Right ventricle myocardium inferior (tissue), 1 donor: ENCODE measurements at regions of chr11 and their contacts with region 1.

Region 1: DNA sequence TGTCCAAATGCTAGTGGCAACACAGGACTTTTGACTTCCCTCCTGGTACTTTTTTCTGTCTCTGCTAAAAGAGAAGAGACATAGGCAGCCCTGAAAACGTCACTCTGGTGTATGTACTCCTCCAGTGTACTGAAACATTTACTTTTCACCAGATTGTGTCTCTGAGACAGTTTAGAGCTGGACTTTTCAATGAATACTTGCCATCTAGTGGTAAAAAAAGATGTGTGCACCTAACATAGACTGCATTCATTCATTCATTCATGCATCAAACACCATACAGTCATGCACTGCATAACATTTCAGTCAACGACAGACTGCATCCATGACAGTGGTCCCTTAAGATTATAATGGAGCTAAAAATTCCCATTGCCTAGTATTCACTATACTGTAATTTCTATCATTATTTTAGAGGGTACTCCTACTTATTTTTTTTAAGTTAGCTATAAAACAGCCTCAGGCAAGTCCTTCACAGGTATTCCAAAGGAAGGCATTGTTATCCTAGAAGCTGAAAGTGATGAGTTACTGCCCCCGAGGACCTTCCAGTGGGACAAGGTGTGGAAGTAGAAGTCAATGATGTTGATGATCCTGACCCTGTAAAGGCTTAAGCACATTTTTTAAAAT is 186.2 kb downstream of the SPON1 start:
- DNase-seq: no peak
- ATAC-seq: peak; percentile 52

Region 2: DNA sequence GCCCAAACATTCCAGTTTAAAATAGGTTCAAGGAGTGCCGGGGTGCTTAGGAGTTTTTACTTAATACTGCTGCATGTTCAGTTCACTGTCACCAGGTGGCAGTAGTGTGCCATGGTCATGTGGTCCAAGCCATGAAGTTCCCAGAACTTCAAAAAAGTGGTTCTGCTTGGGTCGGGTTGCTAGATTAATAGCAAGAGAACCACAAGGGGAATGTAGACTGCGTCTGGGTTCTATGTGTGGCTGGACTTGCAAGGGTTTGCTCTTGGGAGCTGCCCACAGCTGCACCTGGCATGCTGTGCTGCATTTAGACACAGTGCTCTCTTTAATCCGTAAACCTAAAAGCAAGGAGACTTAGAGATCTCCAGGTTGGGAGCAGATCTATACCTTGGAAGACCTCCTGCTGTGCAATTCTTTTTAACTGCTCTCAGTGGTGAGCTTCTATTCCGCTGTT is 192.8 kb before region 1 on chr11:
- intact Hi-C with region 1: loop called (anchors 2 kb)
- DNase-seq: no peak
- ATAC-seq: peak; percentile 50

Region 3: GRCh38 chr11:13970986-13971385 is 177.8 kb before region 1 on chr11:
- intact Hi-C with region 1: loop called (anchors 5 kb)
- DNase-seq: no peak
- ATAC-seq: peak; percentile 27